Posterior cingulate gyrus (tissue), 11 donors: ENCODE measurements at regions of chr22 and their contacts with region 1.

Region 1: GRCh38 chr22:35914665-35915476 is 113.8 kb downstream of the RBFOX2 start:
- DNase-seq: peak in 7 of 10 donors; percentile 25 to 88 (median 57)

Region 2: GRCh38 chr22:35749808-35750207 is 165.1 kb before region 1 on chr22:
- intact Hi-C with region 1: loop called (anchors 5 kb)
- DNase-seq: no peak

Region 3: GRCh38 chr22:35838855-35839576 is 75.9 kb before region 1 on chr22:
- intact Hi-C with region 1: loop called (anchors 5 kb)
- DNase-seq: peak in 4 of 10 donors; percentile 24 to 80 (median 42)

Region 4: GRCh38 chr22:35850831-35851230 is 64.0 kb before region 1 on chr22:
- intact Hi-C with region 1: no loop called
- DNase-seq: no peak